T-cell (primary cell): ENCODE measurements at regions of chr10 and their contacts with region 1.

Region 1: GRCh38 chr10:9219826-9220225 is 1165.3 kb downstream of the GATA3 start:
- DNase-seq: no peak
- ATAC-seq: no peak
- H3K4me3 ChIP-seq: no peak overlapping the region
- H3K4me3 Mint-ChIP-seq: no peak overlapping the region
- H3K27ac ChIP-seq: no peak overlapping the region
- H3K27ac Mint-ChIP-seq: no peak overlapping the region
- H3K4me1 ChIP-seq: no peaks in the 10 kb centered on the region
- H3K4me1 Mint-ChIP-seq: peaks cover 0 to 4% (median 2%) of the 10 kb centered on the region in 3 donors
- H3K27me3 ChIP-seq: peaks cover 0 to 3% of the 10 kb centered on the region in 2 experiments
- H3K27me3 Mint-ChIP-seq: peaks cover 0 to 12% of the 10 kb centered on the region in 2 donors

Region 2: DNA sequence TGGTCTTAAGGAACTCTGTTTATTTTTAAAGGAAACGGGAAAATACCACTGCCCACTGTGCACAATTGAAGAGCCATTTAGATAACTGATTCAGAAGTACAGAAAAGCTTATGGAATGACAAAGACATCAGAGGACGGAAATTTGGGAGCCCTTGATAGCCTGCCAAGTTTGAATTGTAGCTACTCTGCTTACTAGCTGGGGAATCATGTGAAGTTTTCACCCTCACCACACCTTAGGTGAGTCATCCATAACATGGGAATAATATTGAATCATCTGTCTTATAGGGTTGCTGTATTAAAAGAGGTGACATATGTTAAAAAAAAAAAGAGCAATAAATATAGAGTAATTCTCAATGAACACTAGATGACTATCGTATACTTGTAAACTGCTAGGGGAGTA is 61.2 kb before region 1 on chr10:
- CTCF ChIA-PET with region 1: no interaction called
- POLR2A ChIA-PET with region 1: interaction called in 1 of 2 experiments, 14 read pairs
- DNase-seq: no peak
- ATAC-seq: no peak
- H3K4me3 ChIP-seq: no peak overlapping the region
- H3K4me3 Mint-ChIP-seq: no peak overlapping the region
- H3K27ac ChIP-seq: no peak overlapping the region
- H3K27ac Mint-ChIP-seq: no peak overlapping the region
- H3K4me1 ChIP-seq: no peaks in the 10 kb centered on the region
- H3K4me1 Mint-ChIP-seq: peaks cover 3 to 7% (median 6%) of the 10 kb centered on the region in 3 donors
- H3K27me3 ChIP-seq: peaks cover 0 to 3% of the 10 kb centered on the region in 2 experiments
- H3K27me3 Mint-ChIP-seq: no peaks in the 10 kb centered on the region

Region 3: DNA sequence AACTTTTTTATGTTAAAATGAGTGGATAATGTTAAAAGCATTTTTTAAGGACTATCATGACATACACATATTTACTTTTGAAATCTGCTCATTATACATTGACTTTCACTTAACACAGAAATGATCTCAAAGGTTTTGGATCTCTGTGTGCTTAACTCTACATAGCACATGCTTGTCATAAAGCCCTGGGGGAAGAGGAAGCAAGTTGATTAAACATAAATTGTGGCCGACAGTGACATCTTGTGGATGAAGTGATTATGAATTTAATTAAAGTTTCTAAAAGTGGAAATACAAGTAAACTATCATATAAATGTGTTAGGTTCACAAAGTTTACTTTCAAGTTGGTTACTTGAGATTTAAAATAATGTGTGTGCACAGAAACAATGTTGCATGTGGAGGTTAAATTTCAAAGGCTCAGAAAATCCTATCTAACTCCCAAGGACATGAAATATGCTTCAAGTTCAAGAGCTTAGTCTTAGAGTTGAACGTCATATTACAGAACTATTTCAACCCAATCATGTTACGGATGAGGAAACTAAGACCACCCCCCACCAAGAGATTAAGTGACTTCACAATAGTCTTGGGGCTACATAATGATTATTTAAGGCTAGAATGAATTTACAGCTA is 82.4 kb after region 1 on chr10:
- CTCF ChIA-PET with region 1: no interaction called
- POLR2A ChIA-PET with region 1: no interaction called
- DNase-seq: peak in 10 of 35 experiments; percentile 3 to 69 (median 14)
- ATAC-seq: peak in 2 of 4 experiments; percentile 32 to 42
- H3K4me3 ChIP-seq: no peak overlapping the region
- H3K4me3 Mint-ChIP-seq: no peak overlapping the region
- H3K27ac ChIP-seq: no peak overlapping the region
- H3K27ac Mint-ChIP-seq: no peak overlapping the region
- H3K4me1 ChIP-seq: no peaks in the 10 kb centered on the region
- H3K4me1 Mint-ChIP-seq: no peaks in the 10 kb centered on the region
- H3K27me3 ChIP-seq: no peaks in the 10 kb centered on the region
- H3K27me3 Mint-ChIP-seq: peaks cover 8% of the 10 kb centered on the region in 2 donors